ENCODE measurements at regions of chr6 and their contacts with region 1.

Region 1: GRCh38 chr6:42075159-42075838 is 25.0 kb downstream of the TAF8 start:
- DNase-seq: peak; percentile 64 to 88
- H3K4me3 ChIP-seq: no peak overlapping the region
- H3K4me1 ChIP-seq: no peaks in the 10 kb centered on the region
- H3K27me3 ChIP-seq: no peaks in the 10 kb centered on the region

Region 2: DNA sequence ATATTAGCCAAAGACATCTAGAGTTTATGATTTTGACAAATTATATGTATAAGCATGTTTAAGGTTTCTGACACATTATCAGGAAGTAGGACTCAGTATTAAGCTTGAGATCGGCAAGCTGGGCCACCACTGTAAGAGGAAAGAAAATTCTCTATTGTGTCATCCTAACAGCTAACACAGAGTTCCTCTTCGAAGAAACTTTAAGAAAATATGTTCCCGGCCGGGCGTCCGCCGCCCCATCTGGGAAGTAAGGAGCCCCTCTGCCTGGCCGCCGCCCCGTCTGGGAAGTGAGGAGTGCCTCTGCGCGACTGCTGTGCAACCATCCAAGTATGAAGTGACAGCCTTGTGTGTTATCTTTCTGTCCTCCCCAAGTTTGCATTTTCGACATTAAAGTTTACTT is 203.2 kb before region 1 on chr6:
- in situ Hi-C with region 1: no loop called
- DNase-seq: no peak
- H3K4me3 ChIP-seq: no peak overlapping the region
- H3K4me1 ChIP-seq: 0 out of 2 replicates have a peak, but pooled peaks cover 2% of the 10 kb centered on the region
- H3K27me3 ChIP-seq: no peaks in the 10 kb centered on the region

Region 3: DNA sequence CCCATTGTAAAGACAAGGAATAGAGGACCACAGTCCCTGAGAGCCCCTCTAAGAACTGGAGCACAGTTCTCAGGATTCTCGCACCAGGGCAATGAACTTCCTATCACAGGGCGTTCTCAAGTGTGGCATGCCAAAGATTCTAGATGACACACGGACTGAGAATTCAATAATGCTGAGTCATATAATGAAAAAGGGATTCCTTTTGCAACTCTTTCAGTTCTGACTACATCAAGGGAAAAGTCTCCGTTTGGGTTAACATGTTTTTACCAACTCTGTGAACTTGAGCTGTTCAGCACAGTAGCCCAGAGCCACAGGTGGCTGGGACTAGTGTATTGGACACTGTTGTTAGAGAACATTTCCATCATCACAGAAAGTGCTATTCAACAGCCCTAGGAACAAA is 157.8 kb before region 1 on chr6:
- in situ Hi-C with region 1: no loop called
- DNase-seq: no peak
- H3K4me3 ChIP-seq: no peak overlapping the region
- H3K4me1 ChIP-seq: peaks cover 5% of the 10 kb centered on the region; the same call in 1 of the 2 replicates
- H3K27me3 ChIP-seq: no peaks in the 10 kb centered on the region

Region 4: DNA sequence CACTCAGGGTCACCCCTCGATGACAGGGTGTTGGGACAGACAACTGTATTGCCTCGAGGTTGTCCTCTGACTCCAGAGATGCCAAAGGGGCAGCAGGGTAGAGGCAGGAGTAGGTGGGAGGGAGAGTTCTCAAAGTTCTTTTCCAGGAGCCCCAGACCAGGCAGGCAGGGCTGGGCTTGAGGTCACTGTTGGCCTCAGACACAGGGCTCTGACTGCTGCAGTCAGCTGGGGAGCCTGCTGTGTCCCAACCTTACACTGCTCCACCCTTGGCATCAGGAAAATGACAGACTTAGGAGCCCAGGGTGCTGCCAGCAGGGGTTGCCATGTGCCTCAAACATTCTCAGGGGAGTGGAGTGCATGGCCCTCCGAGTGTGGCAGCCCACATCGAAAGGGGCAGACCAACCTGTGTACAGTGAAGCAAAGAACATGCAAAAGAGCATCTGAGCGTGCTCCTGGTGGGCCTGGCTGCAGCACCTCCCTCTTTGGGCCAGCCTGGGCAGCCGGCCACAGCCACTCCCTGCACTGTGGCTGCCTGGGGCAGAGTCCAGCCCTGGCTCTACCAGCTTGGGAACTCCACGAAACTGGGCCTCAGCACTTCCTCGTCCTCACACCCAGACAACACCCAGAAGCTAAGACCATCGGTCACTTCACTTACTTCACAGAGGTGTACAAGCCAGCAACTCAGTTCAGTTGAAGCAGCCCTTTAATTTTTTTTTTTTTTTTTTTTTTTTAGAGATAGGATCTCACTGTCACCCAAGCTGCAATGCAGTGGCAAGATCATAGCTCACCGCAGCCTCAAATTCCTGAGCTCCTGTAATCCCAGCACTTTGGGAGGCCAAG is 43.1 kb after region 1 on chr6:
- in situ Hi-C with region 1: no loop called
- DNase-seq: no peak
- H3K4me3 ChIP-seq: no peak overlapping the region
- H3K4me1 ChIP-seq: no peaks in the 10 kb centered on the region
- H3K27me3 ChIP-seq: no peaks in the 10 kb centered on the region

Region 5: DNA sequence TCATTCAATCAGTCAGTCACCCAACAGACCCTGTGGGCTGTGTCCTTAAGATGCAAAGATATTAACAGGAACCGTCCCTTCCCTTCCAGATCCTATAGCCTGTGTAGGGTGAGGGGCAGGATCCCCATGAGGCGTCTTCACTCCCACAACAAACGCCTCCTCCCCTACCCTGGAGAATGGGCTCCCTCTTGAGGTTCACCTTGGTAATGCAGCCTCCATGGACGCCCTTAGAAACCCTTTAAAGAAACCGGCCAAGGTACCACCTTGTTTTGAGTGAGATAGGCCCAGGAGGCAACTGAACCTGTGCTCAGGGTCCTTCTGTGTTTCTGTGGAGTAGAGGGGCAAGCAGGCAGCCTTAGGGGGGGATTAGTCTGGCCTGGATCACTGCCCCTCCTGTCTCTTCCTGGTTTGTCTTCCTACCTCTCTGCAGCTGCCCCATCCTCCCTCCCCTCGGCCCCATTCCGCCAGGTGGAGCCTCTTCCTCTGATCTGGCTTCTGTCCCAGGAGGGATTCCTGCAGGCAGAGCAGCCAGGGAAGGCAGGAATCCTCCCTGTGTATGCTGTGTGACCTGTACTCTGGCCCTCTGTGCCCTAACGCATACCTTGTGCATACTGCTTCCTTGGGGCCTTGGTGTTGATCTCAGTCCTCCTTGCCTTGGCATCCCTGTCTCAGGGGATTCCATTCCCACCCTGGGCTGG is 91.3 kb after region 1 on chr6:
- in situ Hi-C with region 1: loop called (anchors 5 kb)
- DNase-seq: peak; percentile 80 to 93
- H3K4me3 ChIP-seq: no peak overlapping the region
- H3K4me1 ChIP-seq: no peaks in the 10 kb centered on the region
- H3K27me3 ChIP-seq: no peaks in the 10 kb centered on the region

Region 6: GRCh38 chr6:42217519-42218367 is 142.4 kb after region 1 on chr6 and contains the start of gene MRPS10:
- in situ Hi-C with region 1: loop called (anchors 5 kb)
- DNase-seq: peak; percentile 95 to 96
- H3K4me3 ChIP-seq: peak within 1 kb of the TSS; percentile 75
- H3K4me1 ChIP-seq: peaks cover 5% of the 10 kb centered on the region; the same call in 1 of the 2 replicates
- H3K27me3 ChIP-seq: no peaks in the 10 kb centered on the region

Region 7: GRCh38 chr6:42547407-42548329 is 472.4 kb after region 1 on chr6:
- in situ Hi-C with region 1: loop called (anchors 25 kb)
- DNase-seq: peak; percentile 76 to 91
- H3K4me3 ChIP-seq: peak overlapping the region; percentile 33
- H3K4me1 ChIP-seq: peaks cover 11% of the 10 kb centered on the region
- H3K27me3 ChIP-seq: no peaks in the 10 kb centered on the region

Region 8: DNA sequence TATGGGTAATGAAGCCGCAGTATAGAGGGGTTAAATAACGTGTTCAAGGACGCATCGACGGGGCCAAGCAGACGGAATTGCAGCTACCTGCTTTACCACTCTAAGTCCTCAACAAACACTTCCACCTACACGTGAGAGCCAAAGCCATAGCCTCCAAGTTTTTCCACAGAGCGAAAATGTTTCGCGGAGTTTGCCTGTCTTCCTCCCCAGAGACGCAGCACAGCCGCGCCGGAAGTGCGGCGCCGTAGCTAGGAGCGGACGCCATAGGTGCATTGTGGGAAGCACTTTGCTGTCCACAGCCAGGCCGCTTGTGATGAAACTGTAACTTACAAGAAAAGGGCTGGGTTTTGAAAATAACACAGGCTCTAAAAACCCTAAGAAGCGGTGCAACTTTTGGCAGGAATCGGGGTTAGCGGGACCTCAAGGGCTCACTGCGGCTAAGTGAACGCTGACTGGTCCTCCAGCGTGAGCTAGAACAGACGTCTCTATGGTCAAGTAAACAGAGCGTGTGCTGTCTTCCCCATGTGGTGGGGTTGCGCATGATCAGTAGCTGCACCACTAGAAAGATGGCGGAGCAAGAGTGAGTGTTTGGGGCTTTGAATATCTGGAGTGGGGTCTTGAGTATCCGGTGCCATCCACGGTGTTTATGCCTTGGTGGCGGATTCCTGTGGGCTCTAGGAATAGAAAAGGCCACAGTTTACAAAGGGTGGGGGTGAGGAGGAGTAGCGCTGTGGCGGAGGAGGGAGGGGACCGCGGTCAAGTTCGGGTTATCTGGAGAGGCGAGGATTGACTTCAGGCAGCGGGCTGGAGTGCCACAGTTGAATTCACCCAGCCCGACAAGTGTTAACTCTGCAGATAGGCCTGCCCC is 804.3 kb after region 1 on chr6 and contains the start of gene RPL7L1:
- in situ Hi-C with region 1: loop called (anchors 25 kb)
- DNase-seq: peak; percentile 83 to 85
- H3K4me3 ChIP-seq: peak within 1 kb of the TSS; percentile 78
- H3K4me1 ChIP-seq: peaks cover 10% of the 10 kb centered on the region
- H3K27me3 ChIP-seq: no peaks in the 10 kb centered on the region